ENCODE measurements at regions of chr17 and their contacts with region 1.

Region 1: DNA sequence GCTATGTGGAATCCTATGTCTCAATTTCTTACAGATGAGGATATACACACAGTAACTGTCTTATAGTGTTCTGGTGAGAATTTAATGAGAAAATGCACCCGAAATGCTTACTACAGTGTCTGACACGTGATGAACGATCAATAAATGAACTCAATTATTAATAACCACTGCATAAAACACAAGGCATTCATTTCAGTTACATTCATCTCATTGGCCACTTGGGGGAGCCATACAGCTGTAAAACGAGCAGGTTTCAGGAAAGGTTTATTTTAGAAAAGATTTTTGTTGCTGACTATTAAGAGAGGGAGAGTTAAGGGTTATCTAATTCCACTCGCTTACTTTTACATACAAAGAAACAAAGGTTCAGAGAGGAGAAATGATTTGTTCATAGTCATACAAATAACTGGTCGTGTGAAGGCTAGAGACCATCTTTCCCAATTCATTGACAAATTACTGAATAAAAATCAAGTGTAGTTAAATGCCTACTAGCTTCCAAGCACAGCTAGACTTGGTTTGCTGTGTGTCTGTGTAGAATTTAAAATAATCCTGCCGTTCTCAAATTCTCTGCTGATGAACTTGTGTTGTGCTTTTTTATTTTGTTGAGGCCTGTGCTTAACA is 160.1 kb downstream of the MAP2K4 start:
- DNase-seq: peak; percentile 50
- H3K4me3 Mint-ChIP-seq: no peak overlapping the region
- H3K27ac Mint-ChIP-seq: no peak overlapping the region
- H3K4me1 Mint-ChIP-seq: no peaks in the 10 kb centered on the region
- H3K27me3 Mint-ChIP-seq: no peaks in the 10 kb centered on the region
- CTCF ChIP-seq: peak; percentile 68

Region 2: GRCh38 chr17:12164085-12164484 is 16.7 kb before region 1 on chr17:
- CTCF ChIA-PET with region 1: no interaction called
- intact Hi-C with region 1: no loop called
- DNase-seq: no peak
- H3K4me3 Mint-ChIP-seq: no peak overlapping the region
- H3K27ac Mint-ChIP-seq: no peak overlapping the region
- H3K4me1 Mint-ChIP-seq: no peaks in the 10 kb centered on the region
- H3K27me3 Mint-ChIP-seq: no peaks in the 10 kb centered on the region
- CTCF ChIP-seq: no peak

Region 3: DNA sequence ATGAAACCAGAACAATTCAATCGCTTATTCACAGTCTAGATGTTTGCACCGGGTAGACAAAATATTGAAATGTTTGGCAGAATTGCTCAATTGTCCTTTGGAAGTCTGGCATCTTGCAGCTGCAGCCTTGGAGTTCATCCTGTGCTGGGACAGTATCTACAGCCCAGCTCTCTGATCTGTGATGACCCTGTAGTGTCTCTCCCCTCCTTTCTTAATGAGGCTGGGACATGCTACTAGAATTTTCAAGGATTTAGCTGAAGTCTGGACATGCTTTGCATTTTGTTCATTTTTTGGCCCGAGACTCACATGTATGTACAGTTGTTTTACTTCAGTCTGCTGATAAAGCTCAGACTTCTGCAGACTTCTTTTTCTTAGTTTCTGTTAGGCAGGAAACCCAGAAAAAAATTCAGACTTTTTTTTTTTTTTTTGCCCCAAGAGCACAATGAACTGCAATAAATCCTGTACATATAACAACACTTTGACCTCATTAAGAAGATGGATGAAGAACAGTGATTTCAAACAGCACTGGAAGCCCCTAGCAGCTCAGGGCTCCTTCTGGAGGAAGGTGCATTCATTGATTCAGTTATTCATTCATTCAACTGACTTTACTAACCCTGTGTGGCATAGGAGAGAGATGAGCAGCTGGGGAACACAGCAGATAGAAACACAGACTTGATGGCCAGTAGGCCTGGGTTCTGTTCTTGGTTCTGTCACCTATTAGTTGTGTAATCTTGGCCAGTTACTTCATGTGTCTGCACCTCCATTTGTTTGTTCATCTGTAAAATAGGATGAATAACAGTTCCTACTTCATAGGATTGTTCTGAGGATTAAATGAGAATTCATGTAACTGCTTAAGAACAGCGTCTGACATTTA is 50.0 kb after region 1 on chr17:
- CTCF ChIA-PET with region 1: no interaction called
- intact Hi-C with region 1: loop called (anchors 10 kb)
- DNase-seq: no peak
- H3K4me3 Mint-ChIP-seq: no peak overlapping the region
- H3K27ac Mint-ChIP-seq: no peak overlapping the region
- H3K4me1 Mint-ChIP-seq: no peaks in the 10 kb centered on the region
- H3K27me3 Mint-ChIP-seq: no peaks in the 10 kb centered on the region
- CTCF ChIP-seq: no peak

Region 4: DNA sequence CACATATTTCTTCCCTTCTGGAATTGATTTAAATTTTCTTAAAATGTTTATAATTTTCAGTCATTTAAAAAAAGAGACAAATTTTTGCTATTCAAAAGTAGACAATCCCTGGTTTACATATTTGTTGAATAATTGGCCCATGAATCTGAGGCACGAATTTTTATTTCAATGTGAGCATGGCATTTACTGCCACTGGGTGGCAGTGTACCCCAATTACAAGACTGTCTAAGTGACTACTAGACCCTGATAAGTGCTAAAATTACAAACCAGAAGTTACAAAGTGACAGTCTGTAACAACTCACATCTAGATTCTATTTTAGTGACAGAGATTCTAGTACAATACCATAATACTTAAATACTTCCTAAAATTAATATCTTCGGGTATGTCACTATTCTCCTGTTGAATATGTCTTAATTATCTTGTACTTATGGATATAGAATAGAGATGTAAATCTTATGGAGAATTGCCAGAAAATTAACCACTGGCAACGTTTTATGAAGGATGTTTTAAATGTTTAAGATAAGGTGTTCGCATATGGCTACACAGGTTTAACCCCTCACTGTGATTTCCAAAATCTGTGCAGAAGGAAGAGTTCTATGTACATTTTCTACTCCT is 75.7 kb after region 1 on chr17:
- CTCF ChIA-PET with region 1: no interaction called
- intact Hi-C with region 1: loop called (anchors 1 kb)
- DNase-seq: peak; percentile 40
- H3K4me3 Mint-ChIP-seq: no peak overlapping the region
- H3K27ac Mint-ChIP-seq: no peak overlapping the region
- H3K4me1 Mint-ChIP-seq: no peaks in the 10 kb centered on the region
- H3K27me3 Mint-ChIP-seq: no peaks in the 10 kb centered on the region
- CTCF ChIP-seq: peak; percentile 47

Region 5: DNA sequence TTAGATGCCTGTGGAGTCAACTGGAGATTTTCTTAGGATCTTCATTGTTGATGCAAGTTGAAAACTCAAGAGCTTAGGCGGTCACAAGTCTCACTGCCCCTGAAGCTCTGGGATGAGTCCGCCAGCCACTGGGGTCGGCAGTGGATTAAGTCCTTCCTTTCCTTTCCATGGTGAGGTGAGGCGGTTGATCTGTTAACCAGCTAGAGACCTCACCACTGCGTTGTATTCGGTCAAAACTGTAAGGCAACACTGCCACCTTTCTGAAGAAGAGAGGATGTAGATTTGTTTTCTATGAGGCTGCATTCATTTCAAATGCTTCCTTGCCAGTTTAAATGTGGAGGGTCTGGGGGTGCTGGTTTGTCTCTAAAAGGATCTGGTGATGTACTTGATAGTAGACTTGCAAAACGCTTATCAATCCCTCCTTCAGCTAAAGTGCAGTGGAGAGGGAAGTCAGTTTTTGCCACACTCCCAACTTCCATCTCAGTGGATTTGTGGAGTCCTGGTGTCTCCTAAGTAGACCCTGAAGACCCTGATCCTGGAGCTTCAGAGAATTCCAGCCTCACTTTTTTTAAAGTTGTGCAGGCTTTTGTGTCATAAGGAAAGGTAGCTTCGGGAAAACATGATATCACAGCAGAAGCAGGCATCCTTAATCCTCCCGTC is 486.7 kb after region 1 on chr17:
- CTCF ChIA-PET with region 1: no interaction called
- intact Hi-C with region 1: loop called (anchors 2 kb)
- DNase-seq: peak; percentile 38
- H3K4me3 Mint-ChIP-seq: no peak overlapping the region
- H3K27ac Mint-ChIP-seq: no peak overlapping the region
- H3K4me1 Mint-ChIP-seq: no peaks in the 10 kb centered on the region
- H3K27me3 Mint-ChIP-seq: peaks cover 39% of the 10 kb centered on the region
- CTCF ChIP-seq: no peak

Region 6: GRCh38 chr17:12744298-12744697 is 563.5 kb after region 1 on chr17:
- CTCF ChIA-PET with region 1: no interaction called
- intact Hi-C with region 1: loop called (anchors 5 kb)
- DNase-seq: peak; percentile 39
- H3K4me3 Mint-ChIP-seq: no peak overlapping the region
- H3K27ac Mint-ChIP-seq: peak overlapping the region; percentile 39
- H3K4me1 Mint-ChIP-seq: peaks cover 48% of the 10 kb centered on the region
- H3K27me3 Mint-ChIP-seq: no peaks in the 10 kb centered on the region
- CTCF ChIP-seq: no peak

Region 7: GRCh38 chr17:13002766-13003451 is 822.2 kb after region 1 on chr17:
- CTCF ChIA-PET with region 1: no interaction called
- intact Hi-C with region 1: loop called (anchors 1 kb)
- DNase-seq: peak; percentile 60
- H3K4me3 Mint-ChIP-seq: no peak overlapping the region
- H3K27ac Mint-ChIP-seq: no peak overlapping the region
- H3K4me1 Mint-ChIP-seq: no peaks in the 10 kb centered on the region
- H3K27me3 Mint-ChIP-seq: no peaks in the 10 kb centered on the region
- CTCF ChIP-seq: peak; percentile 67

Region 8: DNA sequence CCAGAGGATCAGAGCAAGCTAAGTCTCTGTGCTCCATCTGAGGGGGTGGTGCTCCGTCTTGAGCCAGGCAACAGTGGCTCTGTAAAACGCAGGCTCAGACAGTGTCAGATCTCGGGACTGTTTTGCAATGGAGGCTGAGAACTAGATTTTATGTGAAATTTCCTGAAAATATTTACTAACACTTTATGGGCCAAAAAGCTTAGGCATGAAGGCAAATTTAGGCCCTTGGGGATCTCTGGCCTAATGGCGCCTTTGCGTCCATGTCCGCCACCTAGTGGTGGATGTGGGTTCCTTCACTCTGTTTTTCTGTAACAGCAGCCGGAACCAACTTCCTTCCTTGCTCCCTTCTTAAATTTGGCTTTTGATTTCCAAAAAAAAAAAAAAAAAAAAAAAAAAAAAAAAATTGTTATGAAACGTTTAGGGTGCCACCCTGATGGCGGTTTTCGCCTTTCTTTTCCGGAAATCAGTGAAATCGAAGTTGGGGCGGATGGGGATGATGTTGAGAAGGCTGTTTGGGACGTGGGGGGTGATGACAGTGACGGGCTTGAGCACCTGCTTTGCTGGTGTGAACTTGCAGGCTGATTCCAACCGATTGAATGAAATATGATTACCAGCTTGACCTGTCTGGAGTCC is 851.1 kb after region 1 on chr17:
- CTCF ChIA-PET with region 1: interaction called, 10 read pairs
- intact Hi-C with region 1: loop called (anchors 1 kb)
- DNase-seq: peak; percentile 42
- H3K4me3 Mint-ChIP-seq: no peak overlapping the region
- H3K27ac Mint-ChIP-seq: no peak overlapping the region
- H3K4me1 Mint-ChIP-seq: no peaks in the 10 kb centered on the region
- H3K27me3 Mint-ChIP-seq: peaks cover 16% of the 10 kb centered on the region
- CTCF ChIP-seq: peak; percentile 52